ENCODE measurements at regions of chr10 and their contacts with region 1.

Region 1: GRCh38 chr10:114869520-114869892 is 47.9 kb downstream of the FHIP2A start:
- DNase-seq: no peak
- ATAC-seq: no peak
- H3K4me3 ChIP-seq: no peak overlapping the region
- H3K27ac ChIP-seq: no peak overlapping the region
- H3K4me1 ChIP-seq: no peaks in the 10 kb centered on the region
- H3K27me3 ChIP-seq: no peaks in the 10 kb centered on the region
- CTCF ChIP-seq: no peak

Region 2: GRCh38 chr10:114831186-114831867 is 38.2 kb before region 1 on chr10:
- intact Hi-C with region 1: loop called in 1 of 2 experiments (anchors 5 kb)
- DNase-seq: no peak
- ATAC-seq: no peak
- H3K4me3 ChIP-seq: no peak overlapping the region
- H3K27ac ChIP-seq: no peak overlapping the region
- H3K4me1 ChIP-seq: peaks cover 21% of the 10 kb centered on the region
- H3K27me3 ChIP-seq: no peaks in the 10 kb centered on the region
- CTCF ChIP-seq: no peak

Measured in psoas muscle (tissue), 8 donors.